PC-3 (cell line): ENCODE measurements at regions of chr11 and their contacts with region 1.

Region 1: DNA sequence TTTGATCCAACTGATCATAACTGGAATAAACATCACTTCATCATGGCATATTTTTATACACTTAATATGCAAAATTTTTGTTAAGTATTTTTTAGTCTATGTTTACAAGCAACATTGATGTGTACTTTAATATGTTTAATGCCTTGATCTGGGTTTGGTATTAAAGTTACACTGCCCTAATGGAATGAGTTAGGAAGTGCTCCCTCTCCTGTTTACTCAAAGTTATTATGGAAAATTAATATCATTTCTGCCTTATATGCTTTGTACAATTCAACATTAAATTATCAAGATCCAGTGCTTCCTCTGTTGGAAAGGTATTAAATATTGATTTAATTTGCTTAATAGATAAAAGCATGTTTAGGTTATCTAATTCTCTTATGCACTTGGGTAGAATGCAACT is 927.3 kb upstream of the RAG2 start:
- DNase-seq: peak; percentile 42
- ATAC-seq: peak; percentile 50
- H3K4me3 ChIP-seq: no peak overlapping the region
- H3K27ac ChIP-seq: no peak overlapping the region
- H3K4me1 ChIP-seq: no peaks in the 10 kb centered on the region
- H3K27me3 ChIP-seq: no peaks in the 10 kb centered on the region
- CTCF ChIP-seq: peak; percentile 61

Region 2: GRCh38 chr11:37002831-37003230 is 522.5 kb before region 1 on chr11:
- CTCF ChIA-PET with region 1: no interaction called
- POLR2A ChIA-PET with region 1: no interaction called
- intact Hi-C with region 1: loop called (anchors 5 kb)
- DNase-seq: no peak
- ATAC-seq: no peak
- H3K4me3 ChIP-seq: no peak overlapping the region
- H3K27ac ChIP-seq: no peak overlapping the region
- H3K4me1 ChIP-seq: no peaks in the 10 kb centered on the region
- H3K27me3 ChIP-seq: no peaks in the 10 kb centered on the region
- CTCF ChIP-seq: no peak

Region 3: DNA sequence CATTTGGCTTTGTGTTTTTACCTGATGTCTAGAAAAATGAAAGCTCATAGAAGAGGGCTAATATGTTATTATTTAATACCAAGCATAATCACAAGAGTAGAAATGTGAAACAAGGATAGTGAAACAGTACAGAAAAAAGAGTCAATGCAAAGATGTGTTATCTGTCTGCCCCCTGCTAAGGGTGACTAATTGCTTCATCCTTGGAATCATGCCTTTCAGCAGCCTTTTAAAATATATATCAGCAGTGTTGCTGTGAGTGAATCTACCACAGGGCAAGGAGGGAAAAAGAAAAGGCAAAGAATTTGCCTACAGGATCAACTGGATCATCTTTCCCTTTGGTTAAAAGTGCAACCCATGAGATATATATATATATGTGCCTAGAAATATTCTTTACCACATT is 60.1 kb before region 1 on chr11:
- CTCF ChIA-PET with region 1: no interaction called
- POLR2A ChIA-PET with region 1: no interaction called
- intact Hi-C with region 1: loop called (anchors 5 kb)
- DNase-seq: no peak
- ATAC-seq: no peak
- H3K4me3 ChIP-seq: no peak overlapping the region
- H3K27ac ChIP-seq: no peak overlapping the region
- H3K4me1 ChIP-seq: no peaks in the 10 kb centered on the region
- H3K27me3 ChIP-seq: no peaks in the 10 kb centered on the region
- CTCF ChIP-seq: no peak

Region 4: GRCh38 chr11:37727371-37727770 is 202.0 kb after region 1 on chr11:
- CTCF ChIA-PET with region 1: no interaction called
- POLR2A ChIA-PET with region 1: no interaction called
- intact Hi-C with region 1: no loop called
- DNase-seq: peak; percentile 48
- ATAC-seq: peak; percentile 40; the same call in 1 of the 2 replicates
- H3K4me3 ChIP-seq: no peak overlapping the region
- H3K27ac ChIP-seq: no peak overlapping the region
- H3K4me1 ChIP-seq: peaks cover 4% of the 10 kb centered on the region; the same call in 1 of the 2 replicates
- H3K27me3 ChIP-seq: no peaks in the 10 kb centered on the region
- CTCF ChIP-seq: no peak